ENCODE measurements at regions of chr6 and their contacts with region 1.

Region 1: GRCh38 chr6:31285486-31285885 is 13.6 kb upstream of the HLA-C start:
- DNase-seq: no peak
- ATAC-seq: no peak
- H3K4me3 ChIP-seq: no peak overlapping the region
- H3K27ac ChIP-seq: no peak overlapping the region
- H3K4me1 ChIP-seq: no peaks in the 10 kb centered on the region
- H3K27me3 ChIP-seq: no peaks in the 10 kb centered on the region
- CTCF ChIP-seq: no peak

Region 2: DNA sequence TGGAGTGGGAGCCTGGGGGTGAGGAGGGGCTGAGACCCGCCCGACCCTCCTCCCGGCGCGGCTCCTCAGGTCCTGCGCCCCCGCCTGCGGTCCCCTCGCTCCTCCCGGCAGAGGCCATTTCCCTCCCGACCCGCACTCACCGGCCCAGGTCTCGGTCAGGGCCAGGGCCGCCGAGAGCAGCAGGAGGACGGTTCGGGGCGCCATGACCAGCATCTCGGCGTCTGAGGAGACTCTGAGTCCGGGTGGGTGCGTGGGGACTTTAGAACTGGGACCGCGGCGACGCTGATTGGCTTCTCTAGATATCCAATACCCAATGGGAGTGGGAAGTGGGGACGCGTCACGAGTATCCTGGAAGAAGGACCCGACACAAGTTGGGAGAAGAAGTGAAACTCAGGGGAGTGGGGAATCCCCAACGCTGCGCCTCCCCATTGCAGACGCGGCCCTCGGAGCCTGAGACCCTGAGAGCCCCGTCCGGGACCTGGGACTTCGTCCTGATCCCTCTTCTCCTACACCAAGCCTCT is 71.5 kb after region 1 on chr6 and contains the start of gene HLA-B:
- intact Hi-C with region 1: loop called in 1 of 3 experiments (anchors 10 kb)
- DNase-seq: peak; percentile 44 to 87 (median 76)
- ATAC-seq: peak; percentile 92 to 97 (median 95)
- H3K4me3 ChIP-seq: peak within 1 kb of the TSS; percentile 5 to 51 (median 49)
- H3K27ac ChIP-seq: peak within 1 kb of the TSS; percentile 56 to 82 (median 64)
- H3K4me1 ChIP-seq: peaks cover 0 to 6% (median 0%) of the 10 kb centered on the region in 3 donors
- H3K27me3 ChIP-seq: no peaks in the 10 kb centered on the region
- CTCF ChIP-seq: no peak
- total RNA-seq, gene HLA-B: 141 to 1,089 (median 229) TPM

Region 3: GRCh38 chr6:31729515-31729978 is 444.1 kb after region 1 on chr6:
- intact Hi-C with region 1: no loop called
- DNase-seq: peak; percentile 77 to 91 (median 86)
- ATAC-seq: peak; percentile 76 to 89 (median 86)
- H3K4me3 ChIP-seq: peak overlapping the region; percentile 25 to 66 (median 54)
- H3K27ac ChIP-seq: peak overlapping the region; percentile 70 to 89 (median 79)
- H3K4me1 ChIP-seq: peaks cover 0 to 4% (median 0%) of the 10 kb centered on the region in 3 donors
- H3K27me3 ChIP-seq: no peaks in the 10 kb centered on the region
- CTCF ChIP-seq: peak in 2 of 4 donors; percentile 27 to 37